GM10248 (cell line): ENCODE measurements at regions of chr18 and their contacts with region 1.

Region 1: DNA sequence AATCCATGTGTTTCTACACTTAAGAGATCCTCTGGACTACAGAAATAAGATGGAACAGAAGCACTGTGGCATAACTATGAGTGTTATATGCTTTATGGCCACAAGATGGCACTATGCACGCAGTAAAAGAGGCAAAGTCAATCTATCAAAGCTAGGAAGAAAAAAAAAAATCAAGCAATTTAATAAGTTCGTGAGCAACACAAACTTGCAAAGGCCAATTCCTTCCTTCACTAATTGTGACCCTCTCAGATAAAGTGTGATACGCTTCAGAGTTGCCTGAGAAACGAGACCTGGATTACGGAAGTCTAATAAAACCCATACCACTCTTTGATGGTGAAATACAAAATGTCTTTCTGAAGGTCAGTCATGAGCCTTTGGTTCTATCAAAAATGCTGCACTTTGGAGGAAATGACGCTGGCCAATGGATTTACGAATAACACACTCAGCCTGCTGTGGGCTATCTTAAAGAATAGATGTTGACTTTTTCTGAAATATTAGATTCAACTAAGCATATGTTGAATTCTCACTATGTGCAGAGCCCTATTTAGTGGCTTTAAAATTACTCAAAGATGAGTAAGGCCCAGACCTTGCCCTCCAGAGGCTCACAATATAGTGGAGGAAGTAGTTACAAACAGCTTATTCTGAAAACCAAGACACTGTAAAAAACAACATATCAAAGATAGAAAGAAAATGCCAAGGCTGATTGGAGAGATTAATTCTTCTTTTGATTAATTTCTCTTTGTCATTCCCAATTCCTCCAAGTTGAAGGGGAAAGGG is 35.5 kb upstream of the TTR start:
- DNase-seq: peak; percentile 60
- CTCF ChIP-seq: peak; percentile 68

Region 2: DNA sequence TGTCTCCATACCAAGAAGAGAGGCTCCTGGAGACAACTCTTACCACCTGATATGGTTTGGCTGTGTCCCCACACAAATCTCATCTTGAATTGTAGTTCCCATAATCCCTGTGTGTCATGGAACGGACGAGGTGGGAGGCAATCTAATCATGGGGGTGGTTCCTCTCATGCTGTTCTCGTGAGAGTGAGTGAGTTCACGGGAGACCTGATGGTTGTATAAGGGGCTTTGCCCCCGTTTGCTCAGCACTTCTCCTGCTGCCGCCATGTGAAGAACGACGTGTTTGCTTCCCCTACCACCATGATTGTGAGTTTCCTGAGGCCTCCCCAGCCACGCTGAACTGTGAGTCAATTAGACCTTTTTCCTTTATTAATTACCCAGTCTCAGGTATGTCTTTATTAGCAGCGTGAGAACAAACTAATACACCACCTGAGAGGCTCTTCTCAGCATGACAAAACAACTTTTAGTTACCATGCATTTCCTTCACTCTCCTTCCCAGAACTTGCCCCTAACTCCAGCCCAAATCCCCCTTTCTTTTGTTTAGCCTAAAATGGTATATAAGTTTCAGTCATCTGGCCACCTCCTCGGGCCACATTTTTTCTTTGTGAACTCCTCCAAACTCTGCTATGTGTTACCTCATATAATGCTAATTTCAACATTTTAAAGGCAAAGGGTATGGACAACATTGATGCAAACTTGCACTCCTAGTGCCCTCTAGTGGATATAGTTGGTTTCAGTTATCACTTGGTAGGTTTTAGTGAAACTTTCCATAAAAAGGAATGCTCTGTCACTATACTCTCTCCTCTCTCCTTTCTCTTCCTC is 263.2 kb after region 1 on chr18:
- CTCF ChIA-PET with region 1: interaction called, 21 read pairs
- POLR2A ChIA-PET with region 1: no interaction called
- DNase-seq: peak; percentile 33
- CTCF ChIP-seq: peak; percentile 76

Region 3: DNA sequence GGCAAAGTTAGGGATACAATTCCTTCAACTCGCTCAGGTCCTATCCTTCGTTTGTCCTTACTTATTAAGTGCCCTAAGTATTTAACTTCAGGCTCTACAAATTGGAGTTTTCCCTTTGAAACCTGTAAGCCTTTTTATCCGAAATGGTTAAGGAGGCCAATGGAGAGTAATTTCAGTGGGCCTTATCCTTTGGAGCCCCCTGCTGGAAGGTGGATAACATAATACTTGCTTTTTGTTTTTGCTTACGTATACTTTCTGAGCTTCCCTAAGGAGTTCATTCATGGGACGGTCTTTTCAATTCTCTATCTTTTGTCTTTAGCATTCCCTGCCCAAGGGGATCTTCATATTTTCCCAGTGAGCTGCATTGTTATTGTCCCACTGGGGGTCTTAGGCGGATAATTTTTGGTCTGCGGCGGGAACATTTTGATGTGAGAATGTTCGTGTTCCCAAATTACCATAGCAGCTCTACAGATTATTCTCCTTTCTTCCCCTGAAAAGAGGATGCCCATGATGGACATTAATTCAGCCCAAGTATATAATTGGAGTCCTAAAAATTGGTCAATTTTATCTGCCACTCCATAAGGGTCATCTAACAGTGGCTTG is 421.2 kb after region 1 on chr18:
- CTCF ChIA-PET with region 1: interaction called, 11 read pairs
- POLR2A ChIA-PET with region 1: no interaction called
- DNase-seq: peak; percentile 24
- CTCF ChIP-seq: peak; percentile 36